HCT116 (cell line): ENCODE measurements at regions of chr5 and their contacts with region 1.

Region 1: GRCh38 chr5:164277720-164278119 is 772.3 kb downstream of the MAT2B start:
- DNase-seq: no peak
- ATAC-seq: no peak
- H3K4me3 ChIP-seq: no peak overlapping the region
- H3K27ac ChIP-seq: no peak overlapping the region
- H3K4me1 ChIP-seq: no peaks in the 10 kb centered on the region
- H3K27me3 ChIP-seq: no peaks in the 10 kb centered on the region
- CTCF ChIP-seq: no peak
- POLR2A ChIP-seq: no peak
- RAD21 ChIP-seq: no peak

Region 2: DNA sequence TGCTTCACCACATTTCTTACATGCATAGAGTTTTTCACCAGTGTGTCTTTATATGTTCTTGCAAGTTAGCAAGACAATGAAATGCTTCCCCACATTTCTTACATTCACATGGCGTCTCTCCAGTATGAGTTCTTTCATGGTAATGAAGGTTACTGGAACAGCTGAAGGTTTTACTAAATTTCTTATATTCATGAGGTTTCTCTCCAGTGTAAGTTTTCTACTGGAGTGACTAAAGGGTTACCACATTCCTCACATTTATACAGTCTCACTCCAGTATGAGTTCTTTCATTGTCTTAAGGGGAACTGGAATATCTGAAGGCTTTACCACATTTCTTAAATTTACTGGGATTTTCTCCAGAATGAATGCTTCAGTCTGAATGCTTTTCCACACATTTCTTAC is 422.0 kb before region 1 on chr5:
- CTCF ChIA-PET with region 1: no interaction called
- POLR2A ChIA-PET with region 1: no interaction called
- RAD21 ChIA-PET with region 1: no interaction called
- intact Hi-C with region 1: loop called (anchors 10 kb)
- DNase-seq: no peak
- ATAC-seq: no peak
- H3K4me3 ChIP-seq: no peak overlapping the region
- H3K27ac ChIP-seq: no peak overlapping the region
- H3K4me1 ChIP-seq: no peaks in the 10 kb centered on the region
- H3K27me3 ChIP-seq: no peaks in the 10 kb centered on the region
- CTCF ChIP-seq: no peak
- POLR2A ChIP-seq: no peak
- RAD21 ChIP-seq: no peak